Breast epithelium (tissue), 4 donors: ENCODE measurements at regions of chr5 and their contacts with region 1.

Region 1: DNA sequence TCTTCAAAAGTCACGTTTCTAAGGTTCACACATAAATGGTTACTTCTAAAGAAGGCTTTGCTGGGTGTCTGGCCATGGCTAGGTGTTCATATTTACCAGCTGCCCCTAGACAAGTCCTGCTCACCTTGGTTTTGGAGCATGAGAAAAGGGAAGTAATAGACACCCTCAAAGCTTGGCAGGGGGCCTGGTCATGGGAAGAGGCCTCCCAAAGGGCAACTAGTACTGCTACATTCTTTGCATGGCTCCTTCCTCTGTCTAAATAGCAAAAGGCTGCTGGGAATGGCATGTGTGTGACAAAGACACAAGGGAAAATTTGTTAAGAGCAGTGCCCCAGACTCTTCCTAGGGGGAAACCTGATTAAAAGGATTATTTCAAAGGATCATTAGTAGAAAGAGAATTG is 93.4 kb downstream of the NRG2 start:
- DNase-seq: peak in 1 of 2 donors; percentile 75
- H3K4me3 ChIP-seq: no peak overlapping the region
- H3K27ac ChIP-seq: peak overlapping the region; percentile 50 to 73
- H3K4me1 ChIP-seq: peaks cover 0 to 15% of the 10 kb centered on the region in 2 donors
- H3K27me3 ChIP-seq: no peaks in the 10 kb centered on the region
- CTCF ChIP-seq: no peak
- POLR2A ChIP-seq: no peak

Region 2: DNA sequence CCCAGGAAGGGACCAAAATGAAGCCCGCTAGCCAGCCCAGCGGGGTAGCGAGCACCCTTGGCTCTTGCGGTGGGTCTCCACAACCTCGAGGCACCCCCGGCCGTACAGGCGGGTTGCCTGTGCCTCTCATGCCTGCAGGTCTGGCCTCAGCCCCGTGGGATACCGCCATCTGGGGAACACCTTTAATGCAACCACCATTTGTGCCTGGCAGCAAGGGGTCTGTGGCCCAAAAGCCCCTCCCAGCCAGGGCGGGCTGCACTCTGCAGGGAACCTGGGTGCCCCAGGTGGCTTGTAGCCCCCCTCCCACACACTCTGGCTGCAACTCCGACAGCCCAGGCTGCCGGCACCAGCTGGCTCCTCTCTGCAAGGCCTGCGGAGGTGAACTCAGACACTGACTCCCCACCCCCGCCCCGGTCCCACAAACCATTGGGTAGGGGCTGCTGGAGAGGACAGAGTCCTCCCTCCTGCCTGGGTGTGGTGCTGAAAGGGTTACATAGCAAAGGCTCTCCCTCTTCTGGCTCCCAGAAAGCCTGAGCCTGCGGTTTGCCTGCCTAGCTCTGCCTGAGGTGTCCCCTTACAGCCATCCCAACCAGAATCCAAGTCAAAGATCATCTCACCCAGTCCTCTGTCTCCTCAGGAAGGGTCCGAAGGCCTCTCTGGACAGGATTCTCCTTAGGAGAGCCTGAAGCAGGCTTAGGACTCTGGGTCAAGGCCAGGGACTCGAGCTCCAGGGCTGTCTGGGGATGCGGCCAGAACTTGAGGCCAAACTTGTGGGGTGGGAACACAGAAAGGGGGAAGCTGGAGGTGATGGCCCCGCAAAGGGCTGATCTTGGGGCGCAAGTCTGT is 44.7 kb before region 1 on chr5:
- intact Hi-C with region 1: loop called (anchors 5 kb)
- DNase-seq: no peak
- H3K4me3 ChIP-seq: peak overlapping the region; percentile 41 to 85 (median 69)
- H3K27ac ChIP-seq: peak overlapping the region; percentile 6 to 26
- H3K4me1 ChIP-seq: no peaks in the 10 kb centered on the region
- H3K27me3 ChIP-seq: no peaks in the 10 kb centered on the region
- CTCF ChIP-seq: no peak
- POLR2A ChIP-seq: no peak